ENCODE measurements at regions of chr2 and their contacts with region 1.

Region 1: GRCh38 chr2:121665504-121665903 is 16.2 kb upstream of the CLASP1 start:
- DNase-seq: no peak
- ATAC-seq: peak; percentile 87 to 94 (median 89)
- H3K4me3 ChIP-seq: no peak overlapping the region
- H3K27ac ChIP-seq: peak overlapping the region; percentile 76
- H3K4me1 ChIP-seq: peaks cover 32% of the 10 kb centered on the region
- H3K27me3 ChIP-seq: no peaks in the 10 kb centered on the region
- CTCF ChIP-seq: no peak

Region 2: GRCh38 chr2:121565389-121566250 is 99.9 kb before region 1 on chr2:
- intact Hi-C with region 1: no loop called
- DNase-seq: peak; percentile 37 to 68
- ATAC-seq: peak; percentile 89 to 91 (median 90)
- H3K4me3 ChIP-seq: peak overlapping the region; percentile 43
- H3K27ac ChIP-seq: peak overlapping the region; percentile 84
- H3K4me1 ChIP-seq: peaks cover 95% of the 10 kb centered on the region
- H3K27me3 ChIP-seq: no peaks in the 10 kb centered on the region
- CTCF ChIP-seq: no peak

Region 3: GRCh38 chr2:121596221-121597080 is 69.1 kb before region 1 on chr2:
- intact Hi-C with region 1: no loop called
- DNase-seq: no peak
- ATAC-seq: peak; percentile 63 to 78 (median 66)
- H3K4me3 ChIP-seq: peak overlapping the region; percentile 47
- H3K27ac ChIP-seq: peak overlapping the region; percentile 82
- H3K4me1 ChIP-seq: peaks cover 56% of the 10 kb centered on the region
- H3K27me3 ChIP-seq: no peaks in the 10 kb centered on the region
- CTCF ChIP-seq: peak; percentile 59

Region 4: GRCh38 chr2:121617042-121617599 is 48.4 kb before region 1 on chr2:
- intact Hi-C with region 1: no loop called
- DNase-seq: no peak
- ATAC-seq: peak in 2 of 4 donors; percentile 6 to 48
- H3K4me3 ChIP-seq: no peak overlapping the region
- H3K27ac ChIP-seq: peak overlapping the region; percentile 39
- H3K4me1 ChIP-seq: peaks cover 46% of the 10 kb centered on the region
- H3K27me3 ChIP-seq: no peaks in the 10 kb centered on the region
- CTCF ChIP-seq: no peak

Region 5: GRCh38 chr2:121710470-121711170 is 45.1 kb after region 1 on chr2:
- intact Hi-C with region 1: loop called in 1 of 2 experiments (anchors 5 kb)
- DNase-seq: no peak
- ATAC-seq: no peak
- H3K4me3 ChIP-seq: no peak overlapping the region
- H3K27ac ChIP-seq: no peak overlapping the region
- H3K4me1 ChIP-seq: no peaks in the 10 kb centered on the region
- H3K27me3 ChIP-seq: no peaks in the 10 kb centered on the region
- CTCF ChIP-seq: no peak

Measured in psoas muscle (tissue), 8 donors.